ENCODE measurements at regions of chr5 and their contacts with region 1.

Region 1: DNA sequence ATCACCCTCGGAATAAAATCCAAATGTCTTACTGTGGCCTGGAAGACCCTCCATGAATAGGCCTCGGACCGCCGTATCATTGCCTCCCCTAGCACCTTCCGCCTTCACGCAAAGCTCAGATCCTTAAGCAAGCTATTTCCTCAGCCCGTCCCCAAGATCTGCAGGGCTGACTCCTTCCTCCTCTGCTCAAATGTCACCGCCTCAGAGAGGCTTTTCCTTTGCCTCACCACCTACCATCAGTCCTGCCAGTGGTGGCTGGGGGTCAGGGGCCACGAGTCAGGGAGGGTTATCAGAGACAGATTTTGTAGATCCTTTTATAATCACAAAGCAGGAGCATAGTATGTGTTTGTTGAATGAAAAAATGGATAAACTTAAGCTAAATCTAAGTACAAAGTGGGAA is 74.4 kb upstream of the KIF2A start:
- DNase-seq: no peak
- H3K4me3 ChIP-seq: no peak overlapping the region
- H3K27ac ChIP-seq: no peak overlapping the region
- H3K4me1 ChIP-seq: no peaks in the 10 kb centered on the region
- H3K27me3 ChIP-seq: no peaks in the 10 kb centered on the region
- CTCF ChIP-seq: no peak
- POLR2A ChIP-seq: no peak

Region 2: DNA sequence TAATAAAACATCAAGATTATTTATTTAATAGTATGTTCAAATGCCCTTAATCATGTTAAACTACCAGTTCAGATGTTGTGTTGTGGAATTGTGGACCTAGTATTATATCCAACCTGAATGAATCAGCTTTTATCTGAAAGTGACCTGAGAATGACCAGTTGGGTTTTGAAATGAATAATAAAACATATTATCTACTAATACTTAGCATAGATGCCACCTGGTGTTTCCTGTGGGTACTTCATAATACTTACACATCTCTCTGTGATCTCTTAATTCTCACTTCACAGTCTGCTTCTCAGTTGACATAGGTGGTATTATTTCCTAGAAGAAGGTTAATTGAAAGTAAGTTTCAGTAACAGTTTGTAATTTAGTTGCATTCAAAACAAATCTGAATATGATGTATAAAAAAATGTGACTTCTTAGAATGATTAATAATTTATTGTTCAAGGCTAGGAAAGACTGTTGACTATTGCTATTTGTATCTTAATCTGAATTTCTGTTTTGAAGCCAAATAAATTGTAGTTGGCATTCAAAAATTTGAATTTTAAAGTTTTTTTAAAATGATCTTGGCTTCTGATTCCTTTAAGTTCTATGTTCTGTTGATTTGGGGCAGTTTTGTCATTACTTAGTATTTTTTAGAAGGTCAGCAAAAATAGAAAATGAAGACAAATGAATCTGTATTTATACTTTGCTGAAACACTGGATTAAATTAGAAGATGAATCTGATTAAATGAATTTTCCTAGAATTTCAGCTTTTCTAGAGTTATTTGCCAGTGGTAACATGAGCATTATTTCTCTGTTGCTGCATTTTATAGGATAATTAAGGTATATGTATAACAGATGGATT is 122.7 kb after region 1 on chr5:
- intact Hi-C with region 1: loop called (anchors 10 kb)
- DNase-seq: peak; percentile 39
- H3K4me3 ChIP-seq: no peak overlapping the region
- H3K27ac ChIP-seq: no peak overlapping the region
- H3K4me1 ChIP-seq: no peaks in the 10 kb centered on the region
- H3K27me3 ChIP-seq: no peaks in the 10 kb centered on the region
- CTCF ChIP-seq: peak; percentile 43 to 65 (median 56)
- POLR2A ChIP-seq: no peak

Measured in testis (tissue), 5 donors.